ENCODE measurements at regions of chrX and their contacts with region 1.

Region 1: DNA sequence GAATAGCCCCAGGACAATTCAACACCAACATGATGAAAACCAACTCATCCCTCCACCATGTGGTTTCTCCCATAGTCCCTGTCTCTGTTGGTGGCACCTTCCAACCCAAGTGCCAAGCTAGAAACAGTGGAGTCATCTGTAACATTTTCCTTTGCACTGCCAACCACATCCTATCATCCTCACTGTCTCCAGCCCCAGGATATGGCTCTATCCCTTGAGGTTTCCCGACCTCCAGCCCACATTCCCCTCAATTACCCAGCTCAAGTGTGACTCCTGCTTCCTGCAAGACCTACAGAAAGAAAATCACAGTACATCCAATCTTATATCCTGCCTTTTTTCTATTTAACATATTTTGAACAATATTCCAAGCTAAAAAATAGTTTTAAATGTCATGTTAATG is 24.2 kb downstream of the PNMA6F start:
- DNase-seq: peak in 1 of 9 experiments; percentile 1
- ATAC-seq: no peak
- H3K4me3 ChIP-seq: no peak overlapping the region
- H3K4me3 Mint-ChIP-seq: no peak overlapping the region
- H3K27ac ChIP-seq: no peak overlapping the region
- H3K27ac Mint-ChIP-seq: no peak overlapping the region
- H3K4me1 ChIP-seq: no peaks in the 10 kb centered on the region
- H3K4me1 Mint-ChIP-seq: peaks cover 10% of the 10 kb centered on the region
- H3K27me3 ChIP-seq: no peaks in the 10 kb centered on the region
- H3K27me3 Mint-ChIP-seq: peaks cover 3% of the 10 kb centered on the region
- CTCF ChIP-seq: no peak

Region 2: DNA sequence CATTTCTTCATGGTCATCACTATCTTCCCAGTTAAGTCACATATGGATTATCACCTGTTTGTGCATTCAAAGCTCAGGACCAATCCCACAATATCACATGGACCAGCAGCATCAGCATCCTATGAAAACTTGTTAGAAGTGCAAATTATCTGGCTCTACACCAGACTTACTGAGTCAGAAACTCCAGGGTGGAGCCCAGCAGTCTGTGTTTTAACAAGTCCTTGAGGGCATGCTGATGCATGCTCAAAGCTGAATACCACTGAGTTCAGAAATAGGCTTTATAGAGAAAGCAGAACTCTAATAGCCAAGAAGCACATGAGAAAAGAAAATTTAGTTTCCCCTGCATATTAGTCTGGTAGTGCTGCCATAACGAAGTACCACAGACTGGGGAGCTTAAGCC is 722.0 kb before region 1 on chrX:
- CTCF ChIA-PET with region 1: no interaction called
- POLR2A ChIA-PET with region 1: no interaction called
- intact Hi-C with region 1: loop called in 1 of 2 experiments (anchors 10 kb)
- DNase-seq: no peak
- ATAC-seq: no peak
- H3K4me3 ChIP-seq: no peak overlapping the region
- H3K4me3 Mint-ChIP-seq: no peak overlapping the region
- H3K27ac ChIP-seq: no peak overlapping the region
- H3K27ac Mint-ChIP-seq: no peak overlapping the region
- H3K4me1 ChIP-seq: no peaks in the 10 kb centered on the region
- H3K4me1 Mint-ChIP-seq: no peaks in the 10 kb centered on the region
- H3K27me3 ChIP-seq: no peaks in the 10 kb centered on the region
- H3K27me3 Mint-ChIP-seq: peaks cover 2% of the 10 kb centered on the region
- CTCF ChIP-seq: no peak

Region 3: DNA sequence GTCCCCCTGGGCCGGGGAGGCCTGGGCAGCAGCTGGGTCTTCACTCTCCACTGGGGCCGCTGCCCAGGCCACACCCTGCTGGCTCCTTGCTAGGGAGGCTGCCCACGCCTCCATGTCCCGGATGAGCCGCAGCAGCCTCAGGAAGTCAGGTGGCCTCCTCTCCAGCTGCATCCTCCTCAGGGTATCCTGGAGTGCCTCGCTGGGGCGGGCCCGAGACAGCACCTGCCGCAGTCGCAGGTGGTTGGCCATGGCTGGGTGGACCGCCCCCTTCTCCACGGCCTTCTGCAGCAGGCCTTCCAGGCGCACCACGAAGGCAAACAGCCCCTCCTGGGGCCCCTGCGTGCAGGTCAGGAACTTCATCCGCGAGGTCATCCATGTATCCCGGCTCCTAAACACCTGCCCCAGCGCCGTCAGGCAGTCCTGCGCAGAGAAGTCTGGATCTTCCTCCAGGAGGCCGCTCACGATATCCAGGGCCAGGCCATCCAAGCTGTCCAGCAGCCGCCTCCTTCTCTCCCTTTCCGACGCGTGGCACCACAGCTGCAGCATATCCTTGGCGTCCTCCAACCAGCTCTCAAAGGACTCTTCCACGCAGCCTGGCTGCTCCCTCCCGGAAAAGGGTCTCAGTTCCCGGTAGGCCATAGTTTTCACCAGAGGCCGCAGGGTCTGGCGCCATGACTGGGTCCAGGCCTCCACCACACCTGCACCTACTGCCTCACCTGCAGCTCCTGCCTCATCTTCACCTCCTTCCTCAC is 22.1 kb after region 1 on chrX:
- CTCF ChIA-PET with region 1: no interaction called
- POLR2A ChIA-PET with region 1: no interaction called
- intact Hi-C with region 1: no loop called
- DNase-seq: no peak
- ATAC-seq: no peak
- H3K4me3 ChIP-seq: no peak overlapping the region
- H3K4me3 Mint-ChIP-seq: no peak overlapping the region
- H3K27ac ChIP-seq: no peak overlapping the region
- H3K27ac Mint-ChIP-seq: no peak overlapping the region
- H3K4me1 ChIP-seq: no peaks in the 10 kb centered on the region
- H3K4me1 Mint-ChIP-seq: peaks cover 12% of the 10 kb centered on the region
- H3K27me3 ChIP-seq: no peaks in the 10 kb centered on the region
- H3K27me3 Mint-ChIP-seq: no peaks in the 10 kb centered on the region
- CTCF ChIP-seq: no peak

Measured in CD8-positive, alpha-beta T cell (primary cell).